AG04449 (cell line): ENCODE measurements at regions of chr10 and their contacts with region 1.

Region 1: GRCh38 chr10:62244780-62245467 is 23.7 kb downstream of the RTKN2 start:
- DNase-seq: no peak
- H3K4me3 ChIP-seq: no peak overlapping the region
- CTCF ChIP-seq: peak; percentile 78

Region 2: GRCh38 chr10:61896854-61897661 is 347.9 kb before region 1 on chr10:
- CTCF ChIA-PET with region 1: interaction called, 12 read pairs
- POLR2A ChIA-PET with region 1: no interaction called
- DNase-seq: no peak
- H3K4me3 ChIP-seq: peak overlapping the region; percentile 37
- CTCF ChIP-seq: peak; percentile 56

Region 3: GRCh38 chr10:62016623-62017490 is 228.1 kb before region 1 on chr10:
- CTCF ChIA-PET with region 1: interaction called, 10 read pairs
- POLR2A ChIA-PET with region 1: no interaction called
- DNase-seq: no peak
- H3K4me3 ChIP-seq: no peak overlapping the region
- CTCF ChIP-seq: no peak

Region 4: GRCh38 chr10:62050893-62051433 is 194.0 kb before region 1 on chr10:
- CTCF ChIA-PET with region 1: interaction called, 21 read pairs
- POLR2A ChIA-PET with region 1: interaction called, 9 read pairs
- DNase-seq: peak; percentile 80
- H3K4me3 ChIP-seq: peak overlapping the region; percentile 67
- CTCF ChIP-seq: no peak

Region 5: GRCh38 chr10:62073429-62073828 is 171.5 kb before region 1 on chr10:
- CTCF ChIA-PET with region 1: interaction called, 18 read pairs
- POLR2A ChIA-PET with region 1: no interaction called
- DNase-seq: no peak
- H3K4me3 ChIP-seq: no peak overlapping the region
- CTCF ChIP-seq: no peak

Region 6: DNA sequence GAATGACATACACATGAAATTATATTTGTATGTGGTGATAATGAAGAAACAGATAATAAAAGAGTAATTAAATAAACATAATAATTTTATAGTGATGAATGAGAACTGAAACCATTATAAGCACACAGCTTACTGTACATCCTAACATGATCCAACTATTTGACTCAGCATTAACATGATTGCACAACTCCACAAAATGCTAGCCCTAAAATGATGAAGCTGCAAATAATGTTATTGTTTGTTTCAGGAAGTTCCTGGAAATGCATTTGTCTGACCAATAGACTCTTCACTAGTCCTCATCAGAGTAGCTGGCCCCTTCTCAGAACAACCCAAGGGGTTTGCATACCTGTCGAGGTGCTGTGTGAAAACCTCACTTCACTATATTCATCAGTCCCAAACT is 91.7 kb before region 1 on chr10:
- CTCF ChIA-PET with region 1: no interaction called
- POLR2A ChIA-PET with region 1: no interaction called
- DNase-seq: peak; percentile 33
- H3K4me3 ChIP-seq: no peak overlapping the region
- CTCF ChIP-seq: no peak

Region 7: GRCh38 chr10:62166331-62167131 is 78.4 kb before region 1 on chr10:
- CTCF ChIA-PET with region 1: no interaction called
- POLR2A ChIA-PET with region 1: no interaction called
- DNase-seq: peak; percentile 64
- H3K4me3 ChIP-seq: no peak overlapping the region
- CTCF ChIP-seq: no peak